Heart left ventricle (tissue), 16 donors: ENCODE measurements at regions of chr20 and their contacts with region 1.

Region 1: GRCh38 chr20:47501483-47502270 is at the start of gene NCOA3:
- DNase-seq: peak; percentile 96 to 99 (median 98)
- ATAC-seq: peak; percentile 96 to 99 (median 99)
- H3K4me3 ChIP-seq: peak within 1 kb of the TSS; percentile 76 to 99 (median 92)
- H3K27ac ChIP-seq: peak within 1 kb of the TSS; percentile 91 to 98 (median 95)
- H3K4me1 ChIP-seq: peaks cover 0 to 46% (median 23%) of the 10 kb centered on the region in 12 donors
- H3K27me3 ChIP-seq: no peaks in the 10 kb centered on the region
- CTCF ChIP-seq: peak; percentile 41 to 68 (median 50)
- POLR2A ChIP-seq: peak; percentile 24 to 98
- total RNA-seq, gene NCOA3: 19.4 to 39.3 (median 26.6) TPM

Region 2: GRCh38 chr20:47392015-47392720 is 109.5 kb before region 1 on chr20:
- intact Hi-C with region 1: loop called in 3 of 10 experiments (anchors 5 to 10 kb)
- DNase-seq: peak in 1 of 5 donors; percentile 62
- ATAC-seq: peak in 3 of 4 donors; percentile 64 to 88 (median 86)
- H3K4me3 ChIP-seq: no peak overlapping the region
- H3K27ac ChIP-seq: peak overlapping the region in 3 of 12 donors; percentile 27 to 65 (median 62)
- H3K4me1 ChIP-seq: peaks cover 0 to 13% (median 0%) of the 10 kb centered on the region in 12 donors
- H3K27me3 ChIP-seq: no peaks in the 10 kb centered on the region
- CTCF ChIP-seq: no peak
- POLR2A ChIP-seq: no peak

Region 3: GRCh38 chr20:47453142-47453782 is 48.4 kb before region 1 on chr20:
- intact Hi-C with region 1: loop called in 1 of 10 experiments (anchors 10 kb)
- DNase-seq: peak in 1 of 5 donors; percentile 40
- ATAC-seq: peak in 3 of 4 donors; percentile 37 to 87 (median 58)
- H3K4me3 ChIP-seq: no peak overlapping the region
- H3K27ac ChIP-seq: peak overlapping the region in 1 of 12 donors; percentile 39
- H3K4me1 ChIP-seq: peaks cover 0 to 24% (median 0%) of the 10 kb centered on the region in 12 donors
- H3K27me3 ChIP-seq: no peaks in the 10 kb centered on the region
- CTCF ChIP-seq: no peak
- POLR2A ChIP-seq: no peak

Region 4: GRCh38 chr20:47576516-47577033 is 74.9 kb after region 1 on chr20:
- intact Hi-C with region 1: loop called in 6 of 10 experiments (anchors 2 to 10 kb)
- DNase-seq: peak in 4 of 5 donors; percentile 55 to 81 (median 70)
- ATAC-seq: peak; percentile 85 to 97 (median 94)
- H3K4me3 ChIP-seq: peak overlapping the region in 8 of 12 donors; percentile 6 to 44 (median 23)
- H3K27ac ChIP-seq: peak overlapping the region in 11 of 12 donors; percentile 39 to 78 (median 62)
- H3K4me1 ChIP-seq: peaks cover 18 to 88% (median 70%) of the 10 kb centered on the region in 12 donors
- H3K27me3 ChIP-seq: no peaks in the 10 kb centered on the region
- CTCF ChIP-seq: peak in 2 of 12 donors; percentile 19 to 22
- POLR2A ChIP-seq: peak in 1 of 2 donors; percentile 22